ENCODE measurements at regions of chr3 and their contacts with region 1.

Region 1: DNA sequence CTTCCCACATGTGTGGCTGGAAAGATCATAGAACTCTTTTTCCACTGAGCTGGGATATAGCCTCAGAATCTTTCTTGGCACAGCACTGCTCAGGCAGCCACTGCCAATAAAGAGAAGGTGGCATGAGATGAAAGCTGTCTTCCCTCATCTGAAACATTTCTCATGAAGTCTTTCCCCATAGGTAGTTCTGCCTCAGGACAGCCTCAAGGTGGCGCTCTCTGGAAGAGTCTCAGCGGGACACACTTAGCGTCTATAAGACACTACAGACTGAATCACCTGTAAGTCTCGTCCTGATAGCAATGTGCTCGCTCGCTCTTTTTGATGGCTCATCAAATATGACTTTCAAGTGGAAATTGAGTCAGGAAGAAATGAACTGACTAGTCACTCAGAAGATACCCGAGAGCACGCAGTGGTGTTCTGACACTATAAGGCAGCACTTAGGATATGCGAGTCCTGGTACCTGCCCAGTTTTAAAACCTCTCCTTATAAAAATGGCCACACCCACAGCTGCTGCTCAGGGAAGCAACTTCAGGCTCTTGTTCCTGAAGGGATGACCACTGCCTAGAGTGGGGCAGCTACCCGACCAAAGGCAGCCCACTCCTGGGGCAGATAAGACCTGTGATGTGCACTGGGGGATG is 269.5 kb downstream of the SUCLG2 start:
- DNase-seq: no peak
- ATAC-seq: peak in 3 of 4 donors; percentile 65 to 76 (median 70)
- H3K4me3 ChIP-seq: no peak overlapping the region
- H3K27ac ChIP-seq: no peak overlapping the region
- H3K4me1 ChIP-seq: peaks cover 10% of the 10 kb centered on the region
- H3K27me3 ChIP-seq: no peaks in the 10 kb centered on the region
- CTCF ChIP-seq: peak; percentile 29

Region 2: GRCh38 chr3:67783281-67784250 is 398.7 kb after region 1 on chr3:
- intact Hi-C with region 1: loop called in 1 of 2 experiments (anchors 10 kb)
- DNase-seq: no peak
- ATAC-seq: no peak
- H3K4me3 ChIP-seq: no peak overlapping the region
- H3K27ac ChIP-seq: no peak overlapping the region
- H3K4me1 ChIP-seq: no peaks in the 10 kb centered on the region
- H3K27me3 ChIP-seq: no peaks in the 10 kb centered on the region
- CTCF ChIP-seq: no peak

Region 3: DNA sequence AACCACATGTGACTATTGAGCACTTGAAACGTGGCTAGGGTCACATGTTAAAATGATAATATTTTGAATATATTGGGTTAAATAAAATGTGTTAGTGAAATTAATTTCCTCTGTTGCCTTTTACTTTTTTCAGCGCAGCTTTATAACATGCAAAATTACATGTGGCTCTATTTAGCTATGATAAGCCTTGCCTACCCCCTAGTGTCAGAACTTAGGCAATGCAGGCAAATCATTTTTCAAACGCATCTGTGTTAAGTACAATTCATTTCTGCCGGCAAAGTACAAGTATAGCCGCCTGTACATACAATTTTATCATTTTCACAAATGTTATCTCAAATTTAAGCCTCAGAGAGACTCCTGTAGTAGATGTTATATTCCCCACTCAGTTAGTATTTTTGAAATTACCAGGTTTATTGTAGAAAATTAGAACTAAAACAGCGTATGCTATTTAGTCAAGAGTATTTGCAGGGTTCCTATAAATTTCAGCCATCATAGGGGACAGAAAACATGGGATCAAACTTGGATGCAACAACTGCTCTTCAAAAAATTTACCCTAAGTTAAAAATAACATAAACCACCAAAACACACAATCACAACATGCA is 1491.3 kb after region 1 on chr3:
- intact Hi-C with region 1: loop called in 1 of 2 experiments (anchors 5 kb)
- DNase-seq: no peak
- ATAC-seq: peak; percentile 47 to 80 (median 72)
- H3K4me3 ChIP-seq: no peak overlapping the region
- H3K27ac ChIP-seq: no peak overlapping the region
- H3K4me1 ChIP-seq: no peaks in the 10 kb centered on the region
- H3K27me3 ChIP-seq: no peaks in the 10 kb centered on the region
- CTCF ChIP-seq: peak; percentile 89

Measured in psoas muscle (tissue), 8 donors.